IMR-90 (cell line): ENCODE measurements at regions of chr4 and their contacts with region 1.

Region 1: DNA sequence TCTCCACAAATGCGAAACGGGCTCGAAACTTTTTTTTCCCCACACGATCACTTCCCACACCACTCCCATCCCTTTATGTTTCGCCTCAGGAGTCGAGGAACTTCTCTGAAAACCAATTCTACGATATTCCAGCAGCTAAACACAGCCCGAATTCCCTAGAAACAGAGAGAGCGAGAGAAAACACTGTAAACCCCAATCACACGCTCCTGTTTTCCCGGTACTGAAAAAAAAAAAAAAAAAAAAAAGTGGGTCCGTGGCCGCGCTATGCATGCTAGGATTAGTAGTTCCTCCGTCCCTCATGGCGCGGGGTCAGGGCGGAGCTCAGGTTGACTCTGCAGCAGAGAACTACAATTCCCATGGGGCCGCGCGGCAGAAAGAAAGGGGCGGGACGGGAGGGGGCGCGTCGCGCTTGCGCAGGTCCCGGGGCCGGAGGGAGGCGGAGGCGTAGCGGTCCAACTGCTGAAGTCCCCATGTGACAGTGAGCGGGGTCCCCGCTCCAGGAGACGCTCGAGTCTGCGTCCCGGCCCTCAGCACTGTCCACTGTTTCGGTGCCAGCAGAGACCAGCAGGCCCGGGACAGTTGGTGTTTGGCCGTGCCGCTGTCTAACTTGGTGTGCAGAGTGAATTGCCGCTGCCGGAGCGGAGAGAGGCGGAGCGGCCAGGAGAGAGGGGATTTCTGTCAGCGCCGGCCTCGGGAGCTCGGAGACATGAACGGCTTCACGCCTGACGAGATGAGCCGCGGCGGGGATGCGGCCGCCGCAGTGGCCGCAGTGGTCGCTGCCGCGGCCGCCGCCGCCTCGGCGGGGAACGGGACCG is at the start of gene SAP30:
- DNase-seq: peak; percentile 98
- ATAC-seq: peak; percentile 91
- H3K4me3 ChIP-seq: peak within 1 kb of the TSS; percentile 96
- H3K27ac ChIP-seq: peak within 1 kb of the TSS; percentile 78
- H3K4me1 ChIP-seq: no peaks in the 10 kb centered on the region; the same call in 1 of the 2 replicates
- H3K27me3 ChIP-seq: no peaks in the 10 kb centered on the region
- CTCF ChIP-seq: no peak
- POLR2A ChIP-seq: peak; percentile 81
- RAD21 ChIP-seq: no peak
- total RNA-seq, gene SAP30: 3.8 and 13.9 TPM in 2 replicates

Region 2: GRCh38 chr4:173334085-173334772 is 36.5 kb before region 1 on chr4 and contains the start of gene HMGB2:
- CTCF ChIA-PET with region 1: interaction called, 3 read pairs
- POLR2A ChIA-PET with region 1: interaction called, 12 read pairs
- dilution Hi-C with region 1: no loop called
- in situ Hi-C with region 1: no loop called
- intact Hi-C with region 1: loop called (anchors 1 kb)
- DNase-seq: peak; percentile 100
- ATAC-seq: peak; percentile 94
- H3K4me3 ChIP-seq: peak within 1 kb of the TSS; percentile 75
- H3K27ac ChIP-seq: peak within 1 kb of the TSS; percentile 89
- H3K4me1 ChIP-seq: no peaks in the 10 kb centered on the region
- H3K27me3 ChIP-seq: no peaks in the 10 kb centered on the region
- CTCF ChIP-seq: no peak
- POLR2A ChIP-seq: peak; percentile 98
- RAD21 ChIP-seq: no peak
- total RNA-seq, gene HMGB2: 49.3 and 112 TPM in 2 replicates

Region 3: GRCh38 chr4:173403051-173403450 is 32.4 kb after region 1 on chr4:
- CTCF ChIA-PET with region 1: no interaction called
- POLR2A ChIA-PET with region 1: interaction called, 10 read pairs
- dilution Hi-C with region 1: no loop called
- in situ Hi-C with region 1: no loop called
- intact Hi-C with region 1: no loop called
- DNase-seq: peak; percentile 39
- ATAC-seq: peak; percentile 37; the same call in 1 of the 2 replicates
- H3K4me3 ChIP-seq: no peak overlapping the region
- H3K27ac ChIP-seq: no peak overlapping the region
- H3K4me1 ChIP-seq: no peaks in the 10 kb centered on the region
- H3K27me3 ChIP-seq: no peaks in the 10 kb centered on the region
- CTCF ChIP-seq: no peak
- POLR2A ChIP-seq: no peak
- RAD21 ChIP-seq: no peak

Region 4: GRCh38 chr4:173494013-173494970 is 123.6 kb after region 1 on chr4:
- CTCF ChIA-PET with region 1: no interaction called
- POLR2A ChIA-PET with region 1: no interaction called
- dilution Hi-C with region 1: no loop called
- in situ Hi-C with region 1: no loop called
- intact Hi-C with region 1: loop called (anchors 1 kb)
- DNase-seq: peak; percentile 62
- ATAC-seq: peak; percentile 73
- H3K4me3 ChIP-seq: peak overlapping the region; percentile 47
- H3K27ac ChIP-seq: no peak overlapping the region
- H3K4me1 ChIP-seq: peaks cover 16% of the 10 kb centered on the region
- H3K27me3 ChIP-seq: peaks cover 32% of the 10 kb centered on the region
- CTCF ChIP-seq: peak; percentile 70
- POLR2A ChIP-seq: no peak
- RAD21 ChIP-seq: peak; percentile 69

Region 5: DNA sequence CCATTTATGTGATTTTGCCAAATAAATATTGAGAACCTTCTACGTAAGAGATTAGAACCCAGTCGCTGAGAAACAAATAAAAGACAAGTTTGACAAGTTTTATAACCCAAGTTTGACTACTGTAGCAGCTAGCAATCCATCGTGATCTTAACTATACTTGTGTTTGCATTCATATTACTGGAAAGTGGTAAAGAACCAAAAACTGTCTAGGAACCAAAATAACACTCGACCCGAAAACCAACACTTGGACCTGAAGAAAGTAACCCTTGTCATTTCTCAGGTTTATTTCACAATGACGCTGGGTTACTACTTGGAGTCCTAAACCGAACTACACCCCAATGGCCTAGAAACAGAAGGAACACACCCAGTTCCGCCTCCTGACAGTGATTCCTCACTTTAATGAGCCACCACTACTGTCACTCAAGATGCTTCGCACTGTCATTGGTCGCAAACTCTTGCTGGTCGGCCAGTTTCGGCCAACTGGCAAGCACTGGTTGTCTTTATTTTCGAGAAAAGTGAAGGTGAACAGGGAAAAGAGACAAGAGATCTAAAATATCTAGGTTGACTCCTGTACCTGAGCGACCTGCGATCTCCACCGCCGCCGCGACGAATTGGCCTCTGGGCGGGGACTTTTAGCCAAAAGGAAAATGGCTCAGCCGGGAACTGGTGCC is 912.3 kb after region 1 on chr4:
- CTCF ChIA-PET with region 1: no interaction called
- POLR2A ChIA-PET with region 1: no interaction called
- dilution Hi-C with region 1: no loop called
- in situ Hi-C with region 1: no loop called
- intact Hi-C with region 1: loop called (anchors 5 kb)
- DNase-seq: peak; percentile 94
- ATAC-seq: peak; percentile 92
- H3K4me3 ChIP-seq: peak overlapping the region; percentile 60
- H3K27ac ChIP-seq: peak overlapping the region; percentile 96
- H3K4me1 ChIP-seq: no peaks in the 10 kb centered on the region
- H3K27me3 ChIP-seq: no peaks in the 10 kb centered on the region
- CTCF ChIP-seq: no peak
- POLR2A ChIP-seq: no peak
- RAD21 ChIP-seq: no peak